HCT116 (cell line): ENCODE measurements at regions of chr11 and their contacts with region 1.

Region 1: GRCh38 chr11:1113405-1114201 is 38.9 kb downstream of the MUC2 start:
- DNase-seq: no peak
- ATAC-seq: no peak
- H3K4me3 ChIP-seq: no peak overlapping the region
- H3K27ac ChIP-seq: no peak overlapping the region
- H3K4me1 ChIP-seq: no peaks in the 10 kb centered on the region; a peak in 1 of 4 replicates
- H3K27me3 ChIP-seq: no peaks in the 10 kb centered on the region
- CTCF ChIP-seq: no peak
- POLR2A ChIP-seq: no peak
- RAD21 ChIP-seq: no peak

Region 2: GRCh38 chr11:1233331-1233715 is 119.7 kb after region 1 on chr11:
- CTCF ChIA-PET with region 1: no interaction called
- POLR2A ChIA-PET with region 1: no interaction called
- RAD21 ChIA-PET with region 1: no interaction called
- intact Hi-C with region 1: loop called (anchors 1 kb)
- DNase-seq: no peak
- ATAC-seq: no peak
- H3K4me3 ChIP-seq: no peak overlapping the region
- H3K27ac ChIP-seq: no peak overlapping the region
- H3K4me1 ChIP-seq: peaks cover 0 to 6% of the 10 kb centered on the region in 2 experiments; a peak in 1 of 4 replicates
- H3K27me3 ChIP-seq: no peaks in the 10 kb centered on the region
- CTCF ChIP-seq: peak; percentile 6 to 27 (median 14); a peak in 1 of 6 replicates
- POLR2A ChIP-seq: no peak
- RAD21 ChIP-seq: peak; percentile 58

Region 3: GRCh38 chr11:1628506-1629325 is 515.1 kb after region 1 on chr11:
- CTCF ChIA-PET with region 1: no interaction called
- POLR2A ChIA-PET with region 1: no interaction called
- RAD21 ChIA-PET with region 1: no interaction called
- intact Hi-C with region 1: loop called (anchors 2 kb)
- DNase-seq: no peak
- ATAC-seq: peak; percentile 99
- H3K4me3 ChIP-seq: no peak overlapping the region
- H3K27ac ChIP-seq: no peak overlapping the region
- H3K4me1 ChIP-seq: peaks cover 0 to 6% of the 10 kb centered on the region in 2 experiments; a peak in 1 of 4 replicates
- H3K27me3 ChIP-seq: peaks cover 3% of the 10 kb centered on the region; the same call in 1 of the 2 replicates
- CTCF ChIP-seq: peak; percentile 79 to 98 (median 97)
- POLR2A ChIP-seq: no peak
- RAD21 ChIP-seq: peak; percentile 73